A673 (cell line): ENCODE measurements at regions of chr13 and their contacts with region 1.

Region 1: DNA sequence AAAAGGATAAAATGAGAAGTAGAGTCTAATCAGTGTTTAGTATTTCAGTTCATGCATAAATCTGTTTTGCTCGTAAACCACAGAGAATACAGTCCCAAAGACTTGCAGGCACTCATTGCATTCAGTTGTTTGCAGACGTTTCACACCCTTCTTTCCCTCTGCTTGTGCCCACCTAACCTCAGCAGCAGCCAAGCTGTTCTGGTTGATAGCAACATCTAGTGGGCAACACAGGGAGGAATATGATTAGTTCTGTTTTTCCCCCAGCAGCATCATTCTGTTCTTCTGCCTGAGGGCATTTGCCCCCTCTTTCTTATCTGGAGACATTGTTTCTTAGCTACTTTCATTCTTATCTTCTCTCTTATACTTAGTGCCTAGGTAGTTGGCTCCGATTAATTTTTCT is 135.6 kb downstream of the PAN3 start:
- DNase-seq: peak; percentile 34
- H3K4me3 ChIP-seq: no peak overlapping the region
- H3K27ac ChIP-seq: no peak overlapping the region
- H3K4me1 ChIP-seq: no peaks in the 10 kb centered on the region
- H3K27me3 ChIP-seq: no peaks in the 10 kb centered on the region
- CTCF ChIP-seq: peak; percentile 42

Region 2: DNA sequence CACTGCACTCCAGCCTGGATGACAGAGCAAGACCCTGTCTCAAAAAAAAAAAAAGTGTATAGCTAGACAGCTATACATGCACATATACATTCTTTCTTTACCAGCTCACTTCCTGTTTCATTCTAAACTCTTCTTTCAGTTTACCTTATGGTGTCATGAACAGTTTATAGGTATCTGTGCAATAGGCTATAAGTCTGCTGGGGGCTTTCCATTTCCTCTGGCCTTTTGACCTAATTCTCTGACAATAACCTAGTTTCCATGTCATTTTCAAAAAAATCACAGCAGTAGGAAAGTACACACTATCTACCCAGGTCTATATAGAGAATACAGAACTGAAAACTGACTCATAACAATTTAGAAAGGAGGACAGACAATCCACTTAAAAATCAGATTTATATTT is 261.0 kb before region 1 on chr13:
- CTCF ChIA-PET with region 1: no interaction called
- POLR2A ChIA-PET with region 1: no interaction called
- intact Hi-C with region 1: loop called (anchors 10 kb)
- DNase-seq: no peak
- H3K4me3 ChIP-seq: no peak overlapping the region
- H3K27ac ChIP-seq: no peak overlapping the region
- H3K4me1 ChIP-seq: no peaks in the 10 kb centered on the region
- H3K27me3 ChIP-seq: no peaks in the 10 kb centered on the region
- CTCF ChIP-seq: no peak

Region 3: DNA sequence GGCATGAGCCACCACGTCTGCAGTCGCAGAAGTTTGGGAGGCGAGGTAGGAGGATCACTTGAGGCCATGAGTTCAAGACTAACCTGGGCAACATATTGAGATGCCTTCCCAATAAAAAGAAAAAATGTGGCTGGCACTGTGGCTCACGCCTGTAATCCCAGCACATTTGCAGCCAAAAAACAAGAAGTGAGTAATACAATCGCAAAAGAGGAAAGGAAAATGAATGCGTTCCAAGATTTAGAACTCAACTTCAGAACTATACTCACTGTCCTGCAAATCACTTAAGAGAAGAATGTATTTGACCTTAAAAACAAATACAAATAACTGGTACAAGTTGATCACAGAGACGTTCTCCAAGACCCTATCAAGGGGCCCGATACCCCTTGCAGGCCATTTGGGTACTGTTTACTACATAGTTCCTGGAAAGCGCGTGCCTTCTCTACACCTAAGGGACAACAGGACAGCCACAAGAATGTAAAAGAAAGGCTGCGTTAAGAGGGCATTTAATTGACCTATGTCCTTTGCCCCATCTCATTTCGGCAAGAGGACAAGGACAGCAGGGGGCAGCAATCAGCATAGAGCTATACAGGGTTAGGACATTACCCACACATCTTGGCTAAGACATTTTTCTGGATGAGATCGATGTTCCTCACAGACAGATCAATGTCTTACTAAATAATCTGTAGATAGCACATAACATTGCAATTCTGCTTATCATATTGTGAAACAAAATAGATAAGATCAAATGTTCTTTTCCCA is 214.9 kb before region 1 on chr13:
- CTCF ChIA-PET with region 1: no interaction called
- POLR2A ChIA-PET with region 1: no interaction called
- intact Hi-C with region 1: loop called (anchors 5 kb)
- DNase-seq: peak; percentile 31
- H3K4me3 ChIP-seq: no peak overlapping the region
- H3K27ac ChIP-seq: no peak overlapping the region
- H3K4me1 ChIP-seq: no peaks in the 10 kb centered on the region
- H3K27me3 ChIP-seq: peaks cover 6% of the 10 kb centered on the region
- CTCF ChIP-seq: peak; percentile 56